ENCODE measurements at regions of chr3 and their contacts with region 1.

Region 1: GRCh38 chr3:195612075-195612800 is 28.5 kb upstream of the APOD start:
- DNase-seq: no peak
- ATAC-seq: no peak
- H3K4me3 ChIP-seq: no peak overlapping the region
- H3K27ac ChIP-seq: no peak overlapping the region
- H3K4me1 ChIP-seq: 0 out of 2 replicates have a peak, but pooled peaks cover 5% of the 10 kb centered on the region
- H3K27me3 ChIP-seq: peaks cover 0 to 19% of the 10 kb centered on the region in 2 experiments; a peak in 4 of 5 replicates
- CTCF ChIP-seq: no peak
- EP300 ChIP-seq: no peak
- POLR2A ChIP-seq: no peak
- RAD21 ChIP-seq: no peak

Region 2: DNA sequence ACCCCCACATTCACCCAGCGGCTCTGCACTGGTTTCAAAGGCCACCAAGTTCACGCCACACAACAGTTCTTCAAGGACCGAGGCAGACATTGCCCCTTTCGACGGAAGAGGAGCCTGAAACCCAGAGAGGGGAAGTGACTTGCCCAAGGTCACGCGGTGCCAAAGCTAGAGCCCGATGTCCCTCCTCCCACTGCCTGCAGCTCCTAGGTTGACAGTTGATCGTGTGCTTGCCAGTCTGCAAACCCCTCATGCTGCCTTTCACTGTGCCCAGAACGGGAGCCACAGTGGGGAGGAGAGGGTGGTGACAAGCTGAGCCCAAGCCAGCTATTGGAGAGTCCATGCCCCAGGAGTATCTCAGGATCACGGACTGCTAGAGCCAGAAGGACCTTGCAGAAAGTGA is 572.1 kb before region 1 on chr3:
- CTCF ChIA-PET with region 1: no interaction called
- POLR2A ChIA-PET with region 1: no interaction called
- in situ Hi-C with region 1: no loop called
- intact Hi-C with region 1: no loop called
- DNase-seq: no peak
- ATAC-seq: no peak
- H3K4me3 ChIP-seq: no peak overlapping the region
- H3K27ac ChIP-seq: no peak overlapping the region
- H3K4me1 ChIP-seq: peaks cover 26% of the 10 kb centered on the region
- H3K27me3 ChIP-seq: peaks cover 7 to 77% of the 10 kb centered on the region in 2 experiments; a peak in 4 of 5 replicates
- CTCF ChIP-seq: no peak
- EP300 ChIP-seq: no peak
- POLR2A ChIP-seq: no peak
- RAD21 ChIP-seq: no peak

Region 3: GRCh38 chr3:195558602-195559001 is 53.6 kb before region 1 on chr3:
- CTCF ChIA-PET with region 1: no interaction called
- POLR2A ChIA-PET with region 1: no interaction called
- in situ Hi-C with region 1: no loop called
- intact Hi-C with region 1: no loop called
- DNase-seq: peak; percentile 49
- ATAC-seq: peak; percentile 64
- H3K4me3 ChIP-seq: no peak overlapping the region
- H3K27ac ChIP-seq: no peak overlapping the region
- H3K4me1 ChIP-seq: peaks cover 37% of the 10 kb centered on the region
- H3K27me3 ChIP-seq: 0 out of 5 replicates have a peak, but pooled peaks cover 0 to 2% of the 10 kb centered on the region in 2 experiments
- CTCF ChIP-seq: peak; percentile 70
- EP300 ChIP-seq: no peak
- POLR2A ChIP-seq: no peak
- RAD21 ChIP-seq: no peak

Region 4: GRCh38 chr3:195583831-195584542 is 28.3 kb before region 1 on chr3 and contains the start of gene APOD:
- CTCF ChIA-PET with region 1: no interaction called
- POLR2A ChIA-PET with region 1: no interaction called
- in situ Hi-C with region 1: no loop called
- intact Hi-C with region 1: loop called (anchors 1 kb)
- DNase-seq: no peak
- ATAC-seq: no peak
- H3K4me3 ChIP-seq: no peak within 1 kb of the TSS
- H3K27ac ChIP-seq: no peak within 1 kb of the TSS
- H3K4me1 ChIP-seq: peaks cover 18% of the 10 kb centered on the region
- H3K27me3 ChIP-seq: peaks cover 0 to 6% of the 10 kb centered on the region in 2 experiments; a peak in 1 of 5 replicates
- CTCF ChIP-seq: no peak
- EP300 ChIP-seq: no peak
- POLR2A ChIP-seq: no peak
- RAD21 ChIP-seq: no peak
- total RNA-seq, gene APOD: not detected in 2 replicates

Measured in HepG2 (cell line).